Vagina (tissue), 2 donors: ENCODE measurements at regions of chr1 and their contacts with region 1.

Region 1: DNA sequence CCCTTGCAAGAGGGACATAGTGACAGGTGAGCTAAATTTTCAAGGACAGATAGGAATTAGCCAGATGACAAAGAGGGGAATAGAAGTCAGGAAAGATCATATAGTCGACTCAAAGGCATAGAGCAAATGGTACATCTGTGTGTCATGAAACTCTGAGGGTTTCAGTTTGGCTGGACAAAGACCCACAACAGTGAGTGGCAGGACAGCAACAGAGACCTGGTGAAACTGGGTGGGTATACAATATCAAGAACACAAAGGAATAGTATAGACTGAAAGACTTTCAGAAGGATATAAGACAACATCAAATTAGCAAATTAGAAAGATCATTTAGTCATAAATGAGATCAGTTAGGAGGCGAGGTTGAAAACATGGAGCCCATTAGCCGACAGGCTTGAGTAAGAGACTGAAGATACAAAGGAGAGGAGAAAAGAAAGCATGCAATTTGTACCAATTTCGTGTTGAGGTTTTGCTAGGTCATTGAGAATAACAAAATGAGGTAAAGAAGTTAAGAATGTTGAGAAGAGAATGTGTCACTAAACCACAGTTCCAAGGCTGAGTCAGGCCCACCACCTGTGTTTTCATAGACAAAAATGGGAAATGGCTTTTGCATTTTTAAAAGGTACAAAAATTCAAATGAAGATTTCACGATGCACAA is 213.8 kb downstream of the HHIPL2 start:
- DNase-seq: no peak
- H3K4me3 ChIP-seq: no peak overlapping the region
- H3K27ac ChIP-seq: no peak overlapping the region
- H3K4me1 ChIP-seq: no peaks in the 10 kb centered on the region
- H3K27me3 ChIP-seq: no peaks in the 10 kb centered on the region
- CTCF ChIP-seq: no peak
- POLR2A ChIP-seq: no peak

Region 2: GRCh38 chr1:221543529-221544120 is 790.5 kb before region 1 on chr1:
- intact Hi-C with region 1: loop called (anchors 5 kb)
- DNase-seq: no peak
- H3K4me3 ChIP-seq: no peak overlapping the region
- H3K27ac ChIP-seq: no peak overlapping the region
- H3K4me1 ChIP-seq: no peaks in the 10 kb centered on the region
- H3K27me3 ChIP-seq: no peaks in the 10 kb centered on the region
- CTCF ChIP-seq: peak in 1 of 3 experiments; percentile 27
- POLR2A ChIP-seq: no peak

Region 3: GRCh38 chr1:223460566-223461189 is 1126.5 kb after region 1 on chr1:
- intact Hi-C with region 1: no loop called
- DNase-seq: no peak
- H3K4me3 ChIP-seq: no peak overlapping the region
- H3K27ac ChIP-seq: no peak overlapping the region
- H3K4me1 ChIP-seq: no peaks in the 10 kb centered on the region
- H3K27me3 ChIP-seq: no peaks in the 10 kb centered on the region
- CTCF ChIP-seq: no peak
- POLR2A ChIP-seq: no peak